CD14-positive monocyte (primary cell): ENCODE measurements at regions of chr12 and their contacts with region 1.

Region 1: GRCh38 chr12:905261-906031 is 44.0 kb downstream of the RAD52 start:
- DNase-seq: peak; percentile 22 to 53 (median 52)
- H3K4me3 ChIP-seq: no peak overlapping the region
- H3K4me3 Mint-ChIP-seq: no peak overlapping the region
- H3K27ac ChIP-seq: peak overlapping the region in 1 of 2 donors; percentile 68
- H3K27ac Mint-ChIP-seq: peak overlapping the region; percentile 16 to 91 (median 79)
- H3K4me1 ChIP-seq: peaks cover 10 to 37% of the 10 kb centered on the region in 2 donors
- H3K4me1 Mint-ChIP-seq: peaks cover 29% of the 10 kb centered on the region
- H3K27me3 ChIP-seq: no peaks in the 10 kb centered on the region
- H3K27me3 Mint-ChIP-seq: peaks cover 0 to 3% (median 0%) of the 10 kb centered on the region in 3 donors
- CTCF ChIP-seq: no peak

Region 2: GRCh38 chr12:1093166-1093751 is 187.8 kb after region 1 on chr12:
- intact Hi-C with region 1: loop called in 1 of 2 experiments (anchors 10 kb)
- DNase-seq: peak; percentile 21 to 43 (median 25)
- H3K4me3 ChIP-seq: no peak overlapping the region
- H3K4me3 Mint-ChIP-seq: no peak overlapping the region
- H3K27ac ChIP-seq: no peak overlapping the region
- H3K27ac Mint-ChIP-seq: no peak overlapping the region
- H3K4me1 ChIP-seq: no peaks in the 10 kb centered on the region
- H3K4me1 Mint-ChIP-seq: peaks cover 3% of the 10 kb centered on the region
- H3K27me3 ChIP-seq: no peaks in the 10 kb centered on the region
- H3K27me3 Mint-ChIP-seq: peaks cover 0 to 2% (median 1%) of the 10 kb centered on the region in 3 donors
- CTCF ChIP-seq: peak; percentile 85